ENCODE measurements at regions of chr3 and their contacts with region 1.

Region 1: DNA sequence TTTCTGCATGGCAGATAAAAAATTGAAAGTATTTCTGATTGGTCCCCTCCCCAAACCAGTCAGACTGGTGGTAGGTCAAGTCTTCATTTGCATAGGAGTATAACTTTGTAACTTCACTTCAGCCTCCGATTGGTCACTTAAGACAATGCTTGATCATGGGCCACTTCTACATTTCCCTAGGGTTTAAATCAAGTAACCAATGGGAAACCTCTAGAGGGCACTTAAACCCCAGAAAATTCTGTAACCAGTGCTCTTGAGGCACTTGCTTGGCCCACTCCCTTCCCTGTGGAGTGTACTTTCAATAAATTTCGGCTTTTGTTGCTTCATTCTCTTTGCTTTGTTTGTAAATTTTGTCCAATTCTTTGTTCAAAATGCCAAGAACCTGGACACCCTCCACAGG is 225.5 kb downstream of the ARPP21 start:
- DNase-seq: no peak
- ATAC-seq: peak; percentile 46
- H3K4me3 ChIP-seq: no peak overlapping the region
- H3K27ac ChIP-seq: no peak overlapping the region
- H3K4me1 ChIP-seq: no peaks in the 10 kb centered on the region
- H3K27me3 ChIP-seq: 0 out of 2 replicates have a peak, but pooled peaks cover 5% of the 10 kb centered on the region
- CTCF ChIP-seq: no peak

Region 2: GRCh38 chr3:35908366-35909232 is 43.7 kb after region 1 on chr3:
- CTCF ChIA-PET with region 1: no interaction called
- POLR2A ChIA-PET with region 1: no interaction called
- intact Hi-C with region 1: loop called (anchors 2 kb)
- DNase-seq: peak; percentile 86
- ATAC-seq: peak; percentile 86
- H3K4me3 ChIP-seq: no peak overlapping the region
- H3K27ac ChIP-seq: no peak overlapping the region
- H3K4me1 ChIP-seq: no peaks in the 10 kb centered on the region
- H3K27me3 ChIP-seq: no peaks in the 10 kb centered on the region
- CTCF ChIP-seq: peak; percentile 91

Region 3: GRCh38 chr3:36514171-36514570 is 649.3 kb after region 1 on chr3:
- CTCF ChIA-PET with region 1: no interaction called
- POLR2A ChIA-PET with region 1: no interaction called
- intact Hi-C with region 1: no loop called
- DNase-seq: peak; percentile 36
- ATAC-seq: peak; percentile 67
- H3K4me3 ChIP-seq: no peak overlapping the region
- H3K27ac ChIP-seq: no peak overlapping the region
- H3K4me1 ChIP-seq: no peaks in the 10 kb centered on the region
- H3K27me3 ChIP-seq: no peaks in the 10 kb centered on the region
- CTCF ChIP-seq: no peak